Panc1 (cell line): ENCODE measurements at regions of chr11 and their contacts with region 1.

Region 1: GRCh38 chr11:34174412-34175041 is 69.1 kb downstream of the NAT10 start:
- DNase-seq: peak; percentile 32
- ATAC-seq: peak; percentile 99
- H3K4me3 ChIP-seq: peak overlapping the region; percentile 29 to 50
- H3K27ac ChIP-seq: peak overlapping the region; percentile 52
- H3K4me1 ChIP-seq: peaks cover 18% of the 10 kb centered on the region
- H3K27me3 ChIP-seq: no peaks in the 10 kb centered on the region
- CTCF ChIP-seq: peak; percentile 99

Region 2: DNA sequence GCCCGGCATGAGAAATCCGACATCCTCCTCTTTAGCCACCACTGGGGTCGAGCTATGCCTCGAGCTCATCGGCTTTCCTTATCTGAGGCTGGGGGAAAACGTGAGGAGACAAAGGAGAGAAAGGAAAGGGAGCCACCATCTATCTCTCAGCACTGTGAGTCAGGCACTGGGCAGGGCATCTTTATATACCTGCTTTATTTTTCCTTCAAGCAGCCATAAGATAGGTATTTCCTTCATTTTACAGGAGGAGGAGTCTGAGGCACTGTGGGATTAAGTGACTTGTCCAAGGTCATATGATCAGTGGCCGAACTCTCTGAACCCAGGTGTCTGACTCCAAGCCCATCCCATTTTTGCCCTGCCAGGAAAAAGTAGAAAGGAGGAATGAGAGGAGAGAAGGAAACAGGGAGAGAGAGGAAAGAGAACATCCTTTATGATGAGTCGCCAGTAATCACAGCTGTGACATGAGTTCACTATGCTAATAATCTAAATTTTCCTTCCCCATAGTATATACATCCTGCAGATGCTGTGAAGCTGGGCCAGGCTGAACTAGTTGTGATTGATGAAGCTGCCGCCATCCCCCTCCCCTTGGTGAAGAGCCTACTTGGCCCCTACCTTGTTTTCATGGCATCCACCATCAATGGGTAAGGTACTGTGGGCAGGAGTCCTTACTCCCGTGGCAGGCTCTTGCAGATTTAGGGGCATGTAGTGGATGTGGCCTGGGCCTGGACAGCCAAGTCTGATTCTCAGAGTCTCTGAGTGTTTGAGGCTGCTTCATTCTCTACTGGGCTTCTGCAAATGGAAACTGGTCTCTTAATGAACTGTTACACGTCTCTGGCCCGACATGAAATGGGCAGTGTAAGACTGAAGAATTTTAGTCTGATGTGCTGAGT is 47.3 kb before region 1 on chr11:
- CTCF ChIA-PET with region 1: interaction called, 6 read pairs
- POLR2A ChIA-PET with region 1: interaction called, 15 read pairs
- in situ Hi-C with region 1: no loop called
- intact Hi-C with region 1: no loop called
- DNase-seq: no peak
- ATAC-seq: no peak
- H3K4me3 ChIP-seq: no peak overlapping the region
- H3K27ac ChIP-seq: no peak overlapping the region
- H3K4me1 ChIP-seq: no peaks in the 10 kb centered on the region
- H3K27me3 ChIP-seq: no peaks in the 10 kb centered on the region
- CTCF ChIP-seq: no peak

Region 3: DNA sequence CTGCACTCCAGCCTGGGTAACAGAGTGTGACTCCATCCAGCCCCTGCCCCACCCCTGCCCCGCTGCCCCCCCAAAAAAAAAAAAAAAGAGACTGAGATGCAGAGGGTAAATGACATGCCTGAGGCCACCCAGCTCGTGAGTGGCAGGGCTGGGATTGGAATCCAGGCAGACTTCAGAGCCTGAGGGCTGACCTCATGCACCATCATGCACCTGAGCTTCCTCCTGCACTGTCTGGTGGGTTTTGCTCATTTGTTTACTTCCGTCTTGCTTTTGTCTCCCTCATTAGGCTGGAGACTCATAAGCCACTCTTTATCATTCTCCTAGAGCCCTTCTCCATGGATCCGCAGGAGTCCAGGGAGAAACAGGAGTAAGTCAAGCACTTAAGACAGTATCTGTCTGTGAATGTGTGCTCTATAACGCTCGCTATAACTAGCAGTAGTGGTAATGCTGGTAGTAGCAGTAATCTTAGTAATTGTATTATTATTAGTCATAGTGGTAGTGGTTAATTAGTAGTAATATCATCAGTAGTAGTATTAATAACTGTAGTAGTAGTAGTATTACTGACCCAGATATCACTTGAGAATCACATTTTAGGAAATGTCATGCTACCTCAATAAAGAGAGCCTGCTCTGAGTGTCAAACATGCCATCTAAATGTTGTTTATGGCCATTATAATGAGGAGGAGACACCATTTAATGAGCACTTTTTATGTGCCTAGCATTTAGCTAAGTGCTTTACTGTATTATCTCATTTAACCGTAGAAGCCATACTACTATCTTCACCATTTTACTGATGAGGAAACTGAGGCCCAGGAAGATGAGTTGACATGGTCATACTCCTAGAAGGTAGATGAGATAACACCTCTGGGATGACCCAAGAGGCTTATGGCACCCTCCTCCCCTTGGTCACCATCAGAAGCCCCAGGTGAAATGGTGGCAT is 15.9 kb after region 1 on chr11:
- CTCF ChIA-PET with region 1: interaction called, 11 read pairs
- POLR2A ChIA-PET with region 1: no interaction called
- in situ Hi-C with region 1: no loop called
- intact Hi-C with region 1: no loop called
- DNase-seq: no peak
- ATAC-seq: no peak
- H3K4me3 ChIP-seq: no peak overlapping the region
- H3K27ac ChIP-seq: no peak overlapping the region
- H3K4me1 ChIP-seq: peaks cover 15% of the 10 kb centered on the region
- H3K27me3 ChIP-seq: no peaks in the 10 kb centered on the region
- CTCF ChIP-seq: no peak

Region 4: GRCh38 chr11:34250732-34251639 is 76.5 kb after region 1 on chr11:
- CTCF ChIA-PET with region 1: interaction called, 11 read pairs
- POLR2A ChIA-PET with region 1: interaction called, 7 read pairs
- in situ Hi-C with region 1: no loop called
- intact Hi-C with region 1: no loop called
- DNase-seq: peak; percentile 74
- ATAC-seq: peak; percentile 82
- H3K4me3 ChIP-seq: peak overlapping the region; percentile 16 to 48; a peak in 3 of 4 replicates
- H3K27ac ChIP-seq: peak overlapping the region; percentile 54
- H3K4me1 ChIP-seq: peaks cover 63% of the 10 kb centered on the region
- H3K27me3 ChIP-seq: no peaks in the 10 kb centered on the region
- CTCF ChIP-seq: no peak

Region 5: GRCh38 chr11:34357701-34358257 is 183.3 kb after region 1 on chr11 and contains the start of gene ABTB2:
- CTCF ChIA-PET with region 1: interaction called, 20 read pairs
- POLR2A ChIA-PET with region 1: no interaction called
- in situ Hi-C with region 1: no loop called
- intact Hi-C with region 1: loop called (anchors 1 kb)
- DNase-seq: peak; percentile 81
- ATAC-seq: peak; percentile 86
- H3K4me3 ChIP-seq: peak within 1 kb of the TSS; percentile 80 to 89
- H3K27ac ChIP-seq: peak within 1 kb of the TSS; percentile 86
- H3K4me1 ChIP-seq: peaks cover 27% of the 10 kb centered on the region
- H3K27me3 ChIP-seq: no peaks in the 10 kb centered on the region
- CTCF ChIP-seq: no peak
- total RNA-seq, gene ABTB2: 22.7 TPM

Region 6: DNA sequence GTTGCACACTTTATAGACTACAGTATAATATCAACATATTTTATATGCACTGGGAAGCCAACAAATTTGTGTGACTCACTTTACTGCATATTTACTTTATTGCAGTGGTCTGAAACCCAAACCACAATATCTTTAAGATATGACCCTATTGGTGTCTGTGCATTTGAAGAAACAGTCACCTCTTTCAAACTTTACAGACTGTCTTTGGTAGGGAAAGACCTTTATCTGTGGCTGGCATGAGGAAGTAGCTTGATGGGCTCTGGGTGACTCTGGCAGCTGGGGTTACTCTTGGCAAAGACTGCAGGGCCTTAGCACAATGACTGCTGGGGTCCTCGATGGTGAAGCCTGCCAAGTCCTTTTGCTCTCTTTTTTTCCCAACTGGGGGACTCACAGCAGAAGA is 204.6 kb after region 1 on chr11:
- CTCF ChIA-PET with region 1: interaction called, 24 read pairs
- POLR2A ChIA-PET with region 1: no interaction called
- in situ Hi-C with region 1: no loop called
- intact Hi-C with region 1: no loop called
- DNase-seq: no peak
- ATAC-seq: peak; percentile 93
- H3K4me3 ChIP-seq: no peak overlapping the region; a peak in 1 of 4 replicates
- H3K27ac ChIP-seq: peak overlapping the region; percentile 79
- H3K4me1 ChIP-seq: peaks cover 16% of the 10 kb centered on the region
- H3K27me3 ChIP-seq: no peaks in the 10 kb centered on the region
- CTCF ChIP-seq: no peak

Region 7: DNA sequence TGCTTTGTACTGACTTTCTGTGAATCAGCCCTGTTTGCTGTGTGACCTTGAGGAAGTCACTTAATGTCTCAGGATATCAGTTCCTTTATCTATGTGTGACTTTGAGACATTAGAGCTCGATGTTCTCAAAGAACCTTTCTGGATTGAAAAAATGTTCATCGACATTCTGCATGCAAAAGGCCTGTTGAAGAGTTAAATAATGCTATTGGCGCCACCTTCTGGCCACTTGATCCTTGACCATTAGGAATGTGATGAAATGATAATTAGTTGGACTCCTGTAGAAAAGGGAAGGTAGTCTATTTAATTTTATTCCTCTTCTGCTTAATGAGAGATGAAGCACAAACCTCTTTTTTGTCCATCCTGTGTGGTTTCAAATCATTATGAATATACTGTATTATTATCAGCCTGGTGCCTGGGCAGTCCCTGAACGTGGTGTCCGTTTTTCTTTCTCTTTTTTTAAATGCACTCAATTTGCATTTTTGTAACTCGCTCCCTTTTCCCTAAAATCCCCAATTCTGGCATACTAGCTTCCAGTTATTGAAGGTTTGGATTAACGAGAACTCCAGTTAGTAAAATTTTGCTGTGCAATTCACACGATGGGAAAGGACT is 318.4 kb after region 1 on chr11:
- CTCF ChIA-PET with region 1: interaction called, 17 read pairs
- POLR2A ChIA-PET with region 1: no interaction called
- in situ Hi-C with region 1: no loop called
- intact Hi-C with region 1: no loop called
- DNase-seq: peak; percentile 52
- ATAC-seq: peak; percentile 66; the same call in 1 of the 2 replicates
- H3K4me3 ChIP-seq: no peak overlapping the region
- H3K27ac ChIP-seq: no peak overlapping the region; the same call in 1 of the 2 replicates
- H3K4me1 ChIP-seq: no peaks in the 10 kb centered on the region; the same call in 1 of the 2 replicates
- H3K27me3 ChIP-seq: no peaks in the 10 kb centered on the region
- CTCF ChIP-seq: peak; percentile 78